Right ventricle myocardium superior (tissue), 1 donor: ENCODE measurements at regions of chr13 and their contacts with region 1.

Region 1: GRCh38 chr13:37602747-37603381 is 4.3 kb upstream of the POSTN start:
- DNase-seq: no peak
- ATAC-seq: no peak

Region 2: GRCh38 chr13:37074703-37075102 is 528.2 kb before region 1 on chr13:
- intact Hi-C with region 1: loop called (anchors 10 kb)
- DNase-seq: no peak
- ATAC-seq: peak; percentile 67

Region 3: GRCh38 chr13:37109051-37109678 is 493.7 kb before region 1 on chr13:
- intact Hi-C with region 1: loop called (anchors 2 kb)
- DNase-seq: no peak
- ATAC-seq: peak; percentile 83